ENCODE measurements at regions of chr5 and their contacts with region 1.

Region 1: DNA sequence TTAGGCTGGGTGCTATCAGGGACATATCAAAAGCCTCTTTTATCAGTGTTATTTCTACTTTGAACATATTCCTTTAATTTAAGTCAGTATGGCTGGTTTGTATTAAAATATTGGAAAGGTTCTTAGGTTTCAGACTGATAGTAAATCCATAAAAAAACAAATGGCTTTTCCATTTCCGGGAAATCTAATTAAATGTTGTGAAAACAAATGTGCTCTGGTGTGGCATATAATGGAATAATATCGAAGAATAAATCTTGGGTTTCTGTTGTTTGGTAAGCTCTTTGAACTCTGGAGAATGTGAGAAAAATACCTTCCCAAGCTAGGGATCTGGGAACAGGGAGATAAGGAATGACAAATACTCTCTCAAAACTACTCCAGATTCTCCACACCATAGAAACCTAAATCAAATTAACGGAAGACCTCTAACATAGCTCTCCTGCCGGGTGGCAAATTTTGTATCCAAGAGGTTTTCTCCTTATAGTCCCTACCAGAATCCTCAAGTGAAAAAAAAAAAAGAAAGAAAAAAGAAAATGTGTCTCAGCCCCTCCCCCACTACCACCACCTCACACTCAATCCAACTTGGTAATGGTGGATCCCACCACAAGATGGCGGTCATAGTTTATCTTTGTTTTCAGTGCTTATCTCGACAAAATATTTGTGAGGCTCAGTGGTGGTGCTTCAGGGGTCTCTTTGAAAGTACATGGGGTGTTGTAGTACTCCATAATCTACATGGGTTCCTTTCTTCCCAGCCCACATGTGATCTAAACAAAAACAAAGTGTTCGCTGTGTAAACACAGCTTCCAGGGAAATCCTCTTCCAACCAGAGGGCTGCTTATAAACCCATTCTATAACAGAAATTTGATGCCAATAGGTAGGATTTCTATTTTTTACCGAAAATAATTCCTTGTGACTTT is 54.6 kb upstream of the FST start:
- DNase-seq: peak; percentile 71 to 79 (median 77)
- ATAC-seq: peak; percentile 85
- H3K4me3 ChIP-seq: no peak overlapping the region
- H3K27ac ChIP-seq: no peak overlapping the region
- H3K4me1 ChIP-seq: peaks cover 0 to 19% of the 10 kb centered on the region in 2 experiments; a peak in 3 of 5 replicates
- H3K27me3 ChIP-seq: peaks cover 0 to 2% of the 10 kb centered on the region in 2 experiments; a peak in 2 of 5 replicates
- CTCF ChIP-seq: peak; percentile 62 to 71 (median 64)
- EP300 ChIP-seq: 0 out of 2 replicates have a peak, but pooled peaks have one; percentile 2
- POLR2A ChIP-seq: no peak
- RAD21 ChIP-seq: peak; percentile 56 to 68

Region 2: GRCh38 chr5:53170748-53171349 is 255.0 kb before region 1 on chr5:
- CTCF ChIA-PET with region 1: no interaction called
- POLR2A ChIA-PET with region 1: no interaction called
- in situ Hi-C with region 1: no loop called
- intact Hi-C with region 1: loop called (anchors 1 kb)
- DNase-seq: peak in 3 of 4 experiments; percentile 11 to 46 (median 24)
- ATAC-seq: peak; percentile 84
- H3K4me3 ChIP-seq: no peak overlapping the region
- H3K27ac ChIP-seq: no peak overlapping the region
- H3K4me1 ChIP-seq: no peaks in the 10 kb centered on the region
- H3K27me3 ChIP-seq: no peaks in the 10 kb centered on the region
- CTCF ChIP-seq: peak; percentile 55 to 68 (median 59); a peak in 5 of 6 replicates
- EP300 ChIP-seq: no peak
- POLR2A ChIP-seq: no peak
- RAD21 ChIP-seq: peak; percentile 70 to 75

Region 3: GRCh38 chr5:53262348-53262970 is 163.4 kb before region 1 on chr5:
- CTCF ChIA-PET with region 1: interaction called, 3 read pairs
- POLR2A ChIA-PET with region 1: no interaction called
- in situ Hi-C with region 1: no loop called
- intact Hi-C with region 1: loop called (anchors 10 kb)
- DNase-seq: peak; percentile 11 to 17 (median 13)
- ATAC-seq: peak; percentile 64; the same call in 2 of the 3 replicates
- H3K4me3 ChIP-seq: no peak overlapping the region
- H3K27ac ChIP-seq: no peak overlapping the region
- H3K4me1 ChIP-seq: no peaks in the 10 kb centered on the region
- H3K27me3 ChIP-seq: no peaks in the 10 kb centered on the region
- CTCF ChIP-seq: peak; percentile 31 to 56 (median 42); a peak in 4 of 6 replicates
- EP300 ChIP-seq: no peak
- POLR2A ChIP-seq: no peak
- RAD21 ChIP-seq: peak; percentile 47 to 69; a peak in 3 of 4 replicates

Region 4: GRCh38 chr5:54217826-54218503 is 792.1 kb after region 1 on chr5:
- CTCF ChIA-PET with region 1: no interaction called
- POLR2A ChIA-PET with region 1: no interaction called
- in situ Hi-C with region 1: loop called (anchors 25 kb)
- intact Hi-C with region 1: no loop called
- DNase-seq: peak; percentile 14 to 52 (median 25)
- ATAC-seq: peak; percentile 84
- H3K4me3 ChIP-seq: no peak overlapping the region
- H3K27ac ChIP-seq: no peak overlapping the region
- H3K4me1 ChIP-seq: no peaks in the 10 kb centered on the region; a peak in 1 of 5 replicates
- H3K27me3 ChIP-seq: no peaks in the 10 kb centered on the region
- CTCF ChIP-seq: peak; percentile 23 to 67 (median 47); a peak in 4 of 6 replicates
- EP300 ChIP-seq: no peak
- POLR2A ChIP-seq: no peak
- RAD21 ChIP-seq: peak; percentile 42 to 53; a peak in 3 of 4 replicates

Region 5: GRCh38 chr5:54229041-54229780 is 803.4 kb after region 1 on chr5:
- CTCF ChIA-PET with region 1: no interaction called
- POLR2A ChIA-PET with region 1: no interaction called
- in situ Hi-C with region 1: loop called (anchors 25 kb)
- intact Hi-C with region 1: loop called (anchors 5 kb)
- DNase-seq: peak; percentile 46 to 65 (median 52)
- ATAC-seq: peak; percentile 79
- H3K4me3 ChIP-seq: no peak overlapping the region
- H3K27ac ChIP-seq: no peak overlapping the region
- H3K4me1 ChIP-seq: peaks cover 5 to 28% of the 10 kb centered on the region in 2 experiments; a peak in 4 of 5 replicates
- H3K27me3 ChIP-seq: no peaks in the 10 kb centered on the region
- CTCF ChIP-seq: peak; percentile 62 to 71 (median 71)
- EP300 ChIP-seq: no peak
- POLR2A ChIP-seq: no peak
- RAD21 ChIP-seq: peak; percentile 46 to 49

Region 6: DNA sequence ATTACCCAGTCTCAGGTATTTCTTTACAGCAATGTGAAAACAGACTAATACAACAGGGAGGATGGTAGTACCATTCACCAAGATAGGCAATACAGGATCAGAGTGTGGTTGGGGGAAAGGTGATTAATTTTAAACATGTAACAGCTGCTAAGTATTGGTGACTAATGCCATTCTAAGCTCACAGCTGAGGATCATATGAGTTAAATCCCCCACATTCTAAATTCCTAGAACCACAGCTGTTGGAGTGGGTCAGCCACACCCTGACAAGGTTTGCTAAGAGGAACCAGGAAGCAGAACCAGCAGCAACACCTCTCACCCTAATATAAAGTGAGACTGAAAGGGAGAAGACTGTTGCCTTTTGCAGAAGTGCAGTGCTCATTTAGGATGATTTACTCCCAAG is 1054.4 kb after region 1 on chr5:
- CTCF ChIA-PET with region 1: no interaction called
- POLR2A ChIA-PET with region 1: no interaction called
- in situ Hi-C with region 1: loop called (anchors 25 kb)
- intact Hi-C with region 1: no loop called
- DNase-seq: no peak
- ATAC-seq: no peak
- H3K4me3 ChIP-seq: no peak overlapping the region
- H3K27ac ChIP-seq: no peak overlapping the region
- H3K4me1 ChIP-seq: no peaks in the 10 kb centered on the region; a peak in 2 of 5 replicates
- H3K27me3 ChIP-seq: no peaks in the 10 kb centered on the region
- CTCF ChIP-seq: no peak
- EP300 ChIP-seq: no peak
- POLR2A ChIP-seq: no peak
- RAD21 ChIP-seq: no peak

Region 7: DNA sequence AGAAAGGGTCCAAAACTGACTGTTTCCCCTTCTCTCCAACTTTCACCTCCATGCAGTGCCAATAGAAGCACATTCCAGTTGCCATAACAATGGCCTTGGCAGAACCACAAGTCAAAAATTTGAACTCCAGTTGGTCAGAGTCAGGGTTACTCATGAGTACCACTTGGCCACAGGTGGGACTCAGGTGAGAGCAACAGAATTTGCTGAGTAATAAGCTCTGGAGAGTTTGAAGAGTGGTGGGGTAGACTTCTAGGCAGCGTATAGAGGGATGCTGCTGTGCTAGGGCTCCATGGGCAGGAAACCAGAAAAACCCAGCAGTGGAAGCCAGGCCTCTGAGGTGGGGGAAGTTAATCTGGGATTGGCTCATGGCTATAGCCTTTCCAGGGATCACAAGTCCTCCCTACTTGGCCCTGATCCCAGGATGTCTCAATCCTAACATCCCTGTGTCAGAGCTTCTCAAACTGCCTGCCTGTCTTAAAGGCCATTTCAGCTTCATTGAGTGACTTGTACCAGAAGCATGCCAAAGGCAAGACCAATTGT is 1121.9 kb after region 1 on chr5:
- CTCF ChIA-PET with region 1: no interaction called
- POLR2A ChIA-PET with region 1: no interaction called
- in situ Hi-C with region 1: no loop called
- intact Hi-C with region 1: no loop called
- DNase-seq: no peak
- ATAC-seq: no peak
- H3K4me3 ChIP-seq: no peak overlapping the region
- H3K27ac ChIP-seq: no peak overlapping the region
- H3K4me1 ChIP-seq: no peaks in the 10 kb centered on the region
- H3K27me3 ChIP-seq: no peaks in the 10 kb centered on the region
- CTCF ChIP-seq: no peak
- EP300 ChIP-seq: no peak
- POLR2A ChIP-seq: no peak
- RAD21 ChIP-seq: no peak

Region 8: DNA sequence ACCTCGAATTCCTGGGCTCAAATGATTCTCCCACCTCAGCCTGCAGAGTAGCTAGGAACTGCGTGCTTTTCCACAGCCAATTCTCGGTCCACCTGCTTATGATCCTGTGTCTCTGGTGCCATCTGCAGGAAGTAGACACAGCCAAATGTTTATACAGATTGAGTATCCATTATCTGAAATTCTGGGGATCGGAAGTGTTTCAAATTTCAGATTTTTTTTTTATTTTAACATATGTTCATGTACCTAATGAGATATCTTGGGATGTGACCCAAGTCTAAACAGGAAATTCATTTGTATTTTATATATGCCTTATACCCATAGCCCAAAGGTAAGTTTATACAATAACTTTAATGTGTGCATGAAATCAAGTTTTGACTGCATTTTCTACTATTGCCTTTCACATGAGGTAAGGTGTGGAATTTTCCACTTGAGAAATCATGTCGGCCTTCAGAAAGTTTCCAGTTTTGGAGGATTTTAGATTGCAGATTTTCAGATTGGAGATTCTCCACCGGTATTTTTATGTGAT is 1470.0 kb after region 1 on chr5:
- CTCF ChIA-PET with region 1: no interaction called
- POLR2A ChIA-PET with region 1: no interaction called
- in situ Hi-C with region 1: loop called (anchors 25 kb)
- intact Hi-C with region 1: no loop called
- DNase-seq: peak in 1 of 4 experiments; percentile 47
- ATAC-seq: peak; percentile 70; the same call in 2 of the 3 replicates
- H3K4me3 ChIP-seq: no peak overlapping the region
- H3K27ac ChIP-seq: no peak overlapping the region
- H3K4me1 ChIP-seq: no peaks in the 10 kb centered on the region
- H3K27me3 ChIP-seq: peaks cover 0 to 4% of the 10 kb centered on the region in 2 experiments; a peak in 2 of 5 replicates
- CTCF ChIP-seq: peak; percentile 25 to 58 (median 40); a peak in 3 of 6 replicates
- EP300 ChIP-seq: no peak
- POLR2A ChIP-seq: no peak
- RAD21 ChIP-seq: peak; percentile 44 to 68; a peak in 3 of 4 replicates